ENCODE measurements at regions of chr2 and their contacts with region 1.

Region 1: GRCh38 chr2:19362755-19363473 is 4.5 kb upstream of the OSR1 start:
- DNase-seq: peak; percentile 79 to 80
- ATAC-seq: peak; percentile 84

Region 2: DNA sequence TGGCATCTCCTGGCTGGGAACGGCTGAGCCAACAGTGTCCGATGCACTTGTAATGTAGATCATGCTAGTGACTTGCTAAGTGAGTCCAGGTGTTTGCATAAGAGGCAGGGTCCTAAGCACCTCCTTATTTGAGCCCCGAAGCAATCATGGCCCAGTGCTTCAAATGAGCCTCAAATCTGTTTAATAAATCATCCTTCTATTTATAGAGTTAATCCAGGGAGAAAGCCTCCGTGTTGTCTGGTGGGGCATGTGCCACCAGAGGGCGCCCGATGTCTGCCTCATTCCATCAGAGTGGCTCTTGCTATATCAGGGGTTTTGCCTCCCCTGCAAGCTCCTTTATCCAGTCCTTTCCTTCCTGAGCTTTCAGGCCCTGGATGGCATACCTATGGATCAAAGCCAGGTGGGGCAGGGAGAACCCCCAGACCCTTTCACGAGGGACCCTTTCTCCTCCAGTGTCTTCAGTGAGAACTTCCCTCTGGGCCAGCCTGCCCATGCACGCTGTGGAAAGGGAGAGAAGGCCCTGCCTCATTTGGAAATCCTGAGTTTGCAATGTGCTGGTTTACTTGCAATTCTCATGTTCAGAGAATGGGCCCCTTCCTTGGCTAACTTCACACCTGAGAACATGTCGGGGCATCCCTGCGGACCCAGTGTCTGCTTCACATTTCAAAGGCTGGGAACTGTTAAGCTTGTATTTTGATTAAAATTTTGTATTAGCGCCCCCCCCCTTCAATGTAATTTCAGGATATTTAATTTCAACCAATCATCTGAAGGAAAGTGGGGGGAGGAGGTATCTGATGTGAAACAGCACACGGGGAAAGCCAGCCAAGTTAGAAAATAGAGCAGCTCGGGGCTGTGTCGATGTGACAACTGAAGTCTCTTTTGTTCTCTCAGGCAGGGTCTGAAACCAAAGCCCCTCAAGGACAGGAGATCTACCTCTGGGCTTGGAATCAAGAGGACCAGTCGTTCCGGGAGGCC is 842.2 kb before region 1 on chr2:
- intact Hi-C with region 1: loop called in 1 of 2 experiments (anchors 10 kb)
- DNase-seq: peak; percentile 49 to 86
- ATAC-seq: peak; percentile 82

Region 3: GRCh38 chr2:18749912-18750526 is 612.9 kb before region 1 on chr2:
- intact Hi-C with region 1: loop called (anchors 5 to 10 kb)
- DNase-seq: peak in 1 of 2 donors; percentile 63
- ATAC-seq: peak; percentile 53

Region 4: GRCh38 chr2:18987592-18988073 is 375.3 kb before region 1 on chr2:
- intact Hi-C with region 1: no loop called
- DNase-seq: peak; percentile 40 to 50
- ATAC-seq: no peak

Region 5: GRCh38 chr2:19299020-19299419 is 63.9 kb before region 1 on chr2:
- intact Hi-C with region 1: no loop called
- DNase-seq: no peak
- ATAC-seq: no peak

Measured in left colon (tissue), 2 donors.